ENCODE measurements at regions of chr1 and their contacts with region 1.

Region 1: DNA sequence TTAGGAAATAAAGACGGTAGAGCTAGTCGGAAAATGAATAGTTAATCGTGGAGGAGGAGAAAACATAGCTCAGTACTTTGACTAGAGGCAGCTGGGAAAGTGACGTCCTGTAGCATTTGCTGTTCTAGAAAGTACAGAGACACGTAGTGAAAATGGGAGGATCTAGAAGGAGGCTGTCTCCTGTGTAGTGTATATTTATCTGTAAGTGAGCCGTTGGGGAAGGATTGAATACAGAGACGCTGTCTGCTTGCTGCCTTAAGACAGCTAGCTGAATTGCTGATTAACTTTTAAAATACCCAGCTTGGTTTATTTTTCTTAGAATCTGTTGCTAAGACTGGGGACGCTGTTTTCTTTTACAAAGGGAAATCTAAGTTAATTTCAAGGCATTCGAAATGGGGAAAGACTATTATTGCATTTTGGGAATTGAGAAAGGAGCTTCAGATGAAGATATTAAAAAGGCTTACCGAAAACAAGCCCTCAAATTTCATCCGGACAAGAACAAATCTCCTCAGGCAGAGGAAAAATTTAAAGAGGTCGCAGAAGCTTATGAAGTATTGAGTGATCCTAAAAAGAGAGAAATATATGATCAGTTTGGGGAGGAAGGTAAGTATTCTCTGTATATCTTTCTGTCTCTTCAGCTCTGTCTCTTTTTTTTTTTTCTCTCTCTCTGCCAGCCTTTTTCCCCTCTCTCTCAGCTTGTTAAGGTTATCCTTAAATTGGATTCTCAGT is at the start of gene DNAJB4:
- DNase-seq: peak; percentile 61
- H3K4me3 ChIP-seq: peak within 1 kb of the TSS; percentile 62 to 70
- H3K27ac ChIP-seq: peak within 1 kb of the TSS; percentile 90 to 95
- H3K4me1 ChIP-seq: peaks cover 6 to 8% of the 10 kb centered on the region in 2 experiments; a peak in 2 of 4 replicates
- H3K27me3 ChIP-seq: no peaks in the 10 kb centered on the region
- CTCF ChIP-seq: no peak
- EP300 ChIP-seq: peak in 1 of 2 experiments; percentile 32; a peak in 1 of 4 replicates
- RAD21 ChIP-seq: no peak
- polyA plus RNA-seq, gene DNAJB4: 13.5 and 17.5 TPM in 2 replicates

Region 2: GRCh38 chr1:77978969-77979876 is 25.7 kb before region 1 on chr1 and contains the start of gene FUBP1:
- CTCF ChIA-PET with region 1: interaction called, 12 read pairs
- POLR2A ChIA-PET with region 1: interaction called, 26 read pairs
- DNase-seq: peak; percentile 85
- H3K4me3 ChIP-seq: peak within 1 kb of the TSS; percentile 88 to 91
- H3K27ac ChIP-seq: peak within 1 kb of the TSS; percentile 96 to 99
- H3K4me1 ChIP-seq: peaks cover 9 to 14% of the 10 kb centered on the region in 2 experiments
- H3K27me3 ChIP-seq: no peaks in the 10 kb centered on the region
- CTCF ChIP-seq: peak; percentile 67
- EP300 ChIP-seq: no peak
- RAD21 ChIP-seq: peak; percentile 40; the same call in 1 of the 2 replicates
- polyA plus RNA-seq, gene FUBP1: 64.1 and 95.7 TPM in 2 replicates

Region 3: GRCh38 chr1:77991638-77992037 is 13.2 kb before region 1 on chr1:
- CTCF ChIA-PET with region 1: no interaction called
- POLR2A ChIA-PET with region 1: interaction called, 10 read pairs
- DNase-seq: no peak
- H3K4me3 ChIP-seq: no peak overlapping the region
- H3K27ac ChIP-seq: no peak overlapping the region
- H3K4me1 ChIP-seq: no peaks in the 10 kb centered on the region
- H3K27me3 ChIP-seq: no peaks in the 10 kb centered on the region
- CTCF ChIP-seq: no peak
- EP300 ChIP-seq: no peak
- RAD21 ChIP-seq: no peak

Region 4: DNA sequence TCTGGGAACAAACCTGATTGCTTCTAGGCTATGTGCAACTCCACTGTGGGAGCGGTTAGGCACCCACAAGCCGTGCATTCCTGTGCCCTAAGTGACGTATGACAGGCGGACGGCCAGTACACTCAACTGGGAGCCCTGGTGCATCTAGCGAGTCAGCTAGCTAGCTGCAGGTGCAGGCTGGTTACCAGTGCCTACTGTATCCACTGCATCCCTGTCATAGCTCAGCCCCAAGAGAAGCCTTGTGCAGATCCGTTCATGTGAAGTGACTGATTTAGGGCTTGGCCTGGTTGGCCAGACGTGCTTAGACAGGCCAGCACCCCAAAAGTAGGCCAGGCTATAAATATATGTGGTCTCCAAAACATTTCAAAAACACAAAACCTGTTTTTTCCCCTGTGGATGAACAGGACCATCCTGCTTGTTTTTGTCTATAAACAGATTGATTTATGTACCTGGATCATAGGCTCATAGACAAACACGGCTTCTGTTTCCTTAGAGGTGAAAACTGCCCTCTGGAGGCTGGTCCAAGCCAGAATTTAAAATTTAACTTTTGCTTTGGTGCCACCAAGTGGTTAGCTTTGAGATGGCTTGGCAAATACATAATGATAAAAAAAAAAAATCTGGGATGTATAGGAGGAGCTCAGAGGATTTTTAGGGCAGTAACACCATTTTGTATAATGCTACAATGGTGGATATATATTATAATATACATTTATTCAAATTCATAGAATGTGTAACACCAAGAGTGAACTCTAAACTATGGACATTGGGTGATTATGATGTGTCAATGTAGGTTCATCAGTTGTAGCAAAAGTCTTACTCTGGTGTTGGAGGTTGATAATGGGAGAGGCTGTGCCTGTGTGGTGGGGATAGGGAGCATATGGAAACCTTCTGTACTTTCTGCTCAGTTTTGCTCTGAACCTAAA is 109.4 kb after region 1 on chr1:
- CTCF ChIA-PET with region 1: interaction called, 16 read pairs
- POLR2A ChIA-PET with region 1: interaction called, 5 read pairs
- DNase-seq: peak; percentile 54
- H3K4me3 ChIP-seq: no peak overlapping the region; a peak in 1 of 4 replicates
- H3K27ac ChIP-seq: no peak overlapping the region
- H3K4me1 ChIP-seq: peaks cover 3 to 4% of the 10 kb centered on the region in 2 experiments; a peak in 1 of 4 replicates
- H3K27me3 ChIP-seq: no peaks in the 10 kb centered on the region
- CTCF ChIP-seq: peak; percentile 98
- EP300 ChIP-seq: no peak
- RAD21 ChIP-seq: peak; percentile 96

Measured in SK-N-SH (cell line).